H1 (cell line): ENCODE measurements at regions of chr1 and their contacts with region 1.

Region 1: DNA sequence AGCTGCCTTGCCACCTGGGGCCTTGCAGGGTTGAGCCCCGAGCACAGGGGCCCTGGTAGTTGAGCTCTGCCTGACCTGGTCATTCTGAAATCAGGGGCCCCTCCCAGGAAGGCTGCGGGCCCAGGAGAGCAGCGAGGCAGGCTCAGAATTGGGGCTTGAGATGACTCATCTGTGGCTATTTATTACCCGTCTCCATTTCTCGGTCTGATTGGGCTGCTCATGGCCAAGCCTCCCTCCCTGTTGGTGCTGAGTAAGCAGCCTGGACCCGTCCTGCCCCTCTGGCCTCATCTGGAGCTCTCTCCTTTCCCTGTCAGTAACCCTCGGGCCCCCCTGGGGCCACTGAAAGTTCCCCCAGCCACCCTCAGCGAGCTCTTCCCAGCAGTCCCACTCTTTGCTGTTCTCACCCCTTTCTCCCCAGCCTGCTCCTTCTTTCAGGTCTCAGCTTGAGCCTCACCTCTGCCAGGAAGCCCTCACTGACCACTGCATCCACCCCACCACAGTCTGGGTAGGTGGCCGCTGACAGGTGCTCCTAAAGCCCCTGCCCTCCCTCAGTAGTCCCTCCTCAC is 11.0 kb upstream of the TNFRSF8 start:
- DNase-seq: no peak
- H3K4me3 ChIP-seq: no peak overlapping the region
- H3K27ac ChIP-seq: no peak overlapping the region
- H3K4me1 ChIP-seq: peaks cover 0 to 13% (median 4%) of the 10 kb centered on the region in 4 experiments; a peak in 5 of 7 replicates
- H3K27me3 ChIP-seq: no peaks in the 10 kb centered on the region; a peak in 1 of 7 replicates
- CTCF ChIP-seq: no peak
- EP300 ChIP-seq: no peak
- POLR2A ChIP-seq: no peak
- RAD21 ChIP-seq: no peak

Region 2: DNA sequence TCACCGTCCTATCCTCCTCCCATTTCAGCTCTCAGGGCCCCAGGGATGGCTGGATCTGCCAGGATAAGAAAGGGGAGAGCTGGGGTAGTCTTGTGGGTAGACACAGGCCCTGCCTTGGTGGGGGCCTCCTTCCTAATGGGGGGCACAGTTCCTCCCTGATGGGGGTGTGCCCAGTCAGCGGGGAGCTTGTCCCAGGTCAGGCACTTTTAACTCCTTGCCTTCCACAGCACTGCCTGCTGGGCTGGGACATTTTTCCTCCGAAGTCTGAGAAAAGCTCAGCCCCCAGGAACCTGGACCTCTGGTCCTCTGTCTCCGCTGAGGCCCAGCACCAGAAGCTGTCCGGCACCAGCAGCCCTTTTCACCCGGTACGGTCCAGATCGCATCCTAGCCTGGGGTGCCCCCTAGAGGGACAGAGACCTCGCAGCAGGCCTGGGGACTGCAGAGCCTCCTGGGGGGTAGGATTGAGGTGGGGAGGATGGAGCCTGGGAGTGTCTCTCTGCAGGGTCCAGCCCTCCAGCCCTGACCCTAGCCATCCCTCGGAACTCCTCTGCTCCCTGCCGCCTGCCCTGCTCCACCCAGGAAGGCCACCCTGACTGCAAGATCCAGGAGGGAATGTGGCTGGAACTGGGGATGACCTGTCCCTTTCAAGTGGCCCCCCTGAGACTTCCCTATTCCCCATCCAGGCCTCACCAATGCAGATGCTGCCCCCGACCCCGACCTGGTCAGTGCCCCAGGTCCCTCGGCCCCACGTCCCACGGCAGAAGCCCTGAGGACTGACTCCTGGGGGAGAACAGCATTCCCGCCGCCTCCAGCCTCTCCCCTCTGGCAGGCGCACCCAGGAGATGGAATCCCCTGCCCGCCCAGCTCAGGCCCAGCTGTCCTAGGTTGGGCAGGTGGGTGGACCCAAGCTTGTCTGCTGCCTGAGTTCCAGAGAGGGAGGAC is 20.8 kb before region 1 on chr1:
- CTCF ChIA-PET with region 1: interaction called, 23 read pairs
- POLR2A ChIA-PET with region 1: interaction called, 17 read pairs
- DNase-seq: peak in 1 of 2 experiments; percentile 73
- H3K4me3 ChIP-seq: no peak overlapping the region
- H3K27ac ChIP-seq: no peak overlapping the region
- H3K4me1 ChIP-seq: no peaks in the 10 kb centered on the region; a peak in 1 of 7 replicates
- H3K27me3 ChIP-seq: no peaks in the 10 kb centered on the region
- CTCF ChIP-seq: peak; percentile 68 to 73 (median 69)
- EP300 ChIP-seq: no peak
- POLR2A ChIP-seq: no peak
- RAD21 ChIP-seq: peak; percentile 67 to 73

Region 3: DNA sequence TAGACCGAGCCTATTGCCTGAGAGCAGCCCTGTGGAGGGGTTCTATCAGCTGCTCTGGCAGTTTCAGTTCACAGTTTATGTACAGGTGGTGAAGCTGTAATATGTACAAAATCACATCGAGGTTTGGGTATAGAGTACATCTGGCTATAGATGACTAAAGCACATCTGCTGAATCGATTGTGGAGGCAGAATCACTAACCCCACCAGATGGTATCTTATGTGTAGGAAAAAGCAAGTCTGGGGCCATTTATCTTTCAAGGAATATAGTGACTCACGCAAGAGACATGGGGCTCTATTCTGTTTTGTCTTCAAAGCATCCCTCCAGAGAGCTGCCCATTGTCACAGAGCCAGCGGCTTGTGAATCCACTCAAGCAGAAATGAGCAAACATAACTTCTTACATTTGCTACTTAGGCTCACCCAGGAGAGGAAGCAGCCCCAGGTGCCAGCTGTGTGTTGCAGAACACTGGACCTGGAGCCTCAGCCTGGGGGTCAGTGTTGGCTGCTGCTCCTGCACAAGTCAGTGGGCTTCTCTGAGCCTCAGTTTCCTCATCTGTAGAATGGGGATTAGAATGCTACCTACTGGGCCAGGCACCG is 11.5 kb before region 1 on chr1:
- CTCF ChIA-PET with region 1: interaction called, 31 read pairs
- POLR2A ChIA-PET with region 1: interaction called, 17 read pairs
- DNase-seq: no peak
- H3K4me3 ChIP-seq: no peak overlapping the region
- H3K27ac ChIP-seq: no peak overlapping the region
- H3K4me1 ChIP-seq: no peaks in the 10 kb centered on the region; a peak in 1 of 7 replicates
- H3K27me3 ChIP-seq: no peaks in the 10 kb centered on the region
- CTCF ChIP-seq: no peak
- EP300 ChIP-seq: no peak
- POLR2A ChIP-seq: no peak
- RAD21 ChIP-seq: no peak

Region 4: GRCh38 chr1:12067900-12068821 is 16.1 kb after region 1 on chr1:
- CTCF ChIA-PET with region 1: interaction called, 12 read pairs
- POLR2A ChIA-PET with region 1: interaction called, 6 read pairs
- DNase-seq: peak; percentile 62 to 64
- H3K4me3 ChIP-seq: 0 out of 8 replicates have a peak overlapping the region, but pooled peaks of 2 of the 4 experiments have one; percentile 14 to 31
- H3K27ac ChIP-seq: no peak overlapping the region
- H3K4me1 ChIP-seq: peaks cover 21 to 39% (median 26%) of the 10 kb centered on the region in 4 experiments
- H3K27me3 ChIP-seq: peaks cover 0 to 16% (median 6%) of the 10 kb centered on the region in 4 experiments; a peak in 4 of 7 replicates
- CTCF ChIP-seq: no peak
- EP300 ChIP-seq: no peak
- POLR2A ChIP-seq: no peak
- RAD21 ChIP-seq: no peak

Region 5: GRCh38 chr1:12129624-12130023 is 77.5 kb after region 1 on chr1:
- CTCF ChIA-PET with region 1: no interaction called
- POLR2A ChIA-PET with region 1: no interaction called
- DNase-seq: no peak
- H3K4me3 ChIP-seq: no peak overlapping the region
- H3K27ac ChIP-seq: no peak overlapping the region
- H3K4me1 ChIP-seq: no peaks in the 10 kb centered on the region; a peak in 1 of 7 replicates
- H3K27me3 ChIP-seq: no peaks in the 10 kb centered on the region
- CTCF ChIP-seq: no peak
- EP300 ChIP-seq: no peak
- POLR2A ChIP-seq: no peak
- RAD21 ChIP-seq: no peak

Region 6: GRCh38 chr1:12161662-12162458 is 109.8 kb after region 1 on chr1:
- CTCF ChIA-PET with region 1: no interaction called
- POLR2A ChIA-PET with region 1: no interaction called
- DNase-seq: peak in 1 of 2 experiments; percentile 23
- H3K4me3 ChIP-seq: no peak overlapping the region
- H3K27ac ChIP-seq: no peak overlapping the region
- H3K4me1 ChIP-seq: peaks cover 0 to 7% (median 0%) of the 10 kb centered on the region in 4 experiments; a peak in 2 of 7 replicates
- H3K27me3 ChIP-seq: peaks cover 0 to 18% (median 13%) of the 10 kb centered on the region in 4 experiments; a peak in 6 of 7 replicates
- CTCF ChIP-seq: no peak
- EP300 ChIP-seq: no peak
- POLR2A ChIP-seq: no peak
- RAD21 ChIP-seq: no peak